ENCODE measurements at regions of chr1 and their contacts with region 1.

Region 1: DNA sequence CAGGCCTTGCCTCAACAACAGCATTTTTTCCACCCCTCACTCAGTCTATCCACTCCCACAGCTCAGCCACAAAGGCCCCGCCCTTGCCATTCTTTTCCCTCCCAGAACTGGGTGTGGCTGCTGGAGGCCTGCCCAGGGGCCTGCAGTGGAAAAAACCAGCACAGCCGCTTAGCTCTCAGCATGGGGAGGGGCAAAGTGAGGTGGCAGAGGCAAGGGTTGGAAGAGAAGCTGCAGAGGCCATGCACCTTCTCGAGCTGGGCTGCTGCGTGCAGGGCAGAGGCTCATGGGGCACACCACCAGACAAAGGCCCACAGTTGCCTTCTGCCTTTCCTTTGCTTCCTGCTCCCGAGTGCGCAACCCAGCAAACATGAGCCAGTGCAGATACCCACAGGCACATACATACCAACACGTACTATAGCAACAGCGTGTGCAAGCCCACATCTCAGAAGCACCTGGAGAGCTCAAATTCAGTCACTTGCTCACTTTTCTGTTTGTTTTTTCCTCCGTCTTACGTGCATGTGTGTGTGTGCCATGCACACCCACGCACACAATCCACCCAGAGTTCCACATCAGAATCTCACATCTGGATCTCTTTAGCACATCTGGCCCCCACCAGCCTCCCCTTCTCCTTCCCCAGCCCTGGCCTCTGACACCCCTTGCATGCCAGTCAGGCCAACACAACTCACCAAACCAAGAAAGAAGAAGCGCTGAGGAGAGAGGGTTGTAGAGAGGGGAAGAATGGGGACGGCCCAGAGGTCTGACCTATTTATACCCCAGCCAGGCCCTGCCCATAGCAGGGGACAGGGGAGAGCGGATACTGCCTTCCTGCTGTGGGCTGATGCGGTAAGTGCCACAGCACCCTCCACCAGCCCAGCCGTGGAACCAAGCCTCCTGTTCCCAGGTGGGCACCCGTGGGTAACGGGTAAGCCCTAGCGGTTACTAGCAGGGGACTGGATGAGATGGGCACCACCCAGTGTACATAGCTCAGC is at the start of gene S100A4:
- DNase-seq: peak; percentile 84 to 97
- H3K4me3 ChIP-seq: peak within 1 kb of the TSS; percentile 47 to 68
- H3K27ac ChIP-seq: peak within 1 kb of the TSS; percentile 90 to 92
- H3K4me1 ChIP-seq: peaks cover 48 to 73% of the 10 kb centered on the region in 2 donors
- H3K27me3 ChIP-seq: no peaks in the 10 kb centered on the region
- CTCF ChIP-seq: no peak
- total RNA-seq, gene S100A4: 690 TPM

Region 2: DNA sequence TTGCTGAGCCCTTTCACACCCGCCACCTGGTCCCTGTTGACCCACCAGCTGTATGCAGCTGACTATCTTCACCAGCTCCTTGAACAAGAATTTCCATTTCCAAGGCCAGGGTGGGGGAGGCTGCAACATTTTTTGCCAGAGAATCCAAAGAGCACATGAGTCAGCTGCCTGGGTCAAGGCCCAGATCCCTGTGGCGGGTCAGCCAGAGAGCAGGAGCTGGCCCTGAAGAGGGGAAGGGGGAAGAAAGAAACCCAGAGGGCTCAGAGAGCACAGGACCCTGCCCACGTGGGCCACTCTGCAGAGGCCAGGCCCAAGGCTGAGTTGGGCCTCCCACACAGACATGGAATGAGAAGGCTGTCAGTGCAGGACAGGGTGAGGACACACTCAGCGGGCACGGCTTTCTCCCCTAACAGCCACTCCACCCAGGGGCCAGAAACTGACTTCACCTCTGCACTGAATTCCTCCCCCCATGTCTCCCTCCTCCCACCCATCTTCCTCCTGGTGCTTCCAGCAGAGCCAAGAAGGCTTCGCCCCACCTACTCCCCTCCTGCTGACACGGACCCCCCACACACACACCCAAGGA is 38.4 kb before region 1 on chr1:
- intact Hi-C with region 1: no loop called
- DNase-seq: peak; percentile 80 to 95
- H3K4me3 ChIP-seq: peak overlapping the region in 1 of 2 donors; percentile 6
- H3K27ac ChIP-seq: peak overlapping the region; percentile 78 to 94
- H3K4me1 ChIP-seq: peaks cover 11 to 25% of the 10 kb centered on the region in 2 donors
- H3K27me3 ChIP-seq: no peaks in the 10 kb centered on the region
- CTCF ChIP-seq: no peak

Region 3: GRCh38 chr1:153556348-153556747 is 11.0 kb after region 1 on chr1:
- intact Hi-C with region 1: no loop called
- DNase-seq: no peak
- H3K4me3 ChIP-seq: no peak overlapping the region
- H3K27ac ChIP-seq: no peak overlapping the region
- H3K4me1 ChIP-seq: peaks cover 17 to 20% of the 10 kb centered on the region in 2 donors
- H3K27me3 ChIP-seq: no peaks in the 10 kb centered on the region
- CTCF ChIP-seq: no peak

Region 4: DNA sequence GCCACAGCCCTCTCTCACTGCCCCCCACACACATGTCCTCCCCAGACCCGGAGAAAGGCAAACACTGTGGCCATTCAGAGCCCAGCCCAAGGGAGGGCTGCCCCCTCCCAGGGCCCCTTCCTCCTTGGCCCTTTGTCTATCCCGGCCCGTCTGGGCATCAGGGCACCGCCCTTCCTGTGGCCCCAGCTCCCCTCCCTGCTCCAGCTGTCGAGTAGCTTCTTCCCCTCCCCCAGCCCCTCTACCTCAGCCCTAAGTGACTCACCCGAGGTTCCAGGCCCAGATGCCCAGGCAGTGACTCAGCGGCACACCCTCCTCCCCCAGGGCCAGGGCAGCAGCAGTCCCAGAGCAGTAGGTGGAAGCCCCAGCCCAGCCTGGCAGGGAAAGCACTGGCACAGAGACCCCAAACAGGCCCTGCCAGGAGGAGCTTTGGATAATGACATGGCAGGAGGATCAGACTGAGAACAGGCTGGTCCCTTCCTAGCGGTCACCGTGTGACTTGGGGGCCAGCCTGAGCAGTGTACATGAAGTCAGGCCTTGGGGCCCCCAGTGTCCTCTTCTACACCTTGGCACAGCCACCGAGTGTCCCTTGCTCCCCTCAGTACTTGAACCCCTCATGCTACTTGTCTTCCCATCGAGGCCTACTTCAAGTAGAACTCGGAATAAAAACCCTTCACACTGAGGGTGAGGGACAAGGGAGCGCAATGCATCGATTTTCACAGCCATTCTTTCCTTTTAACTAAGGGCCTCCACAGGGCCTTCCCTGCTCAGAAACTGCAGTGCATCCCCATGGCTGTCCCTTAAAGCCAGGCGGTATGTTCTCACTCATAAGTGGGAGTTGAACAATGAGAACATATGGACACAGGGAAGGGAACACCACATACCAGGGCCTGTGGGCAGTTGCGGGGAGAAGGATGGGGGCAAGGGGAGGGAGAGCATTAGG is 21.3 kb after region 1 on chr1:
- intact Hi-C with region 1: loop called (anchors 1 kb)
- DNase-seq: peak; percentile 97 to 99
- H3K4me3 ChIP-seq: peak overlapping the region in 1 of 2 donors; percentile 4
- H3K27ac ChIP-seq: peak overlapping the region; percentile 91 to 94
- H3K4me1 ChIP-seq: peaks cover 16 to 30% of the 10 kb centered on the region in 2 donors
- H3K27me3 ChIP-seq: no peaks in the 10 kb centered on the region
- CTCF ChIP-seq: no peak

Region 5: GRCh38 chr1:153598309-153599172 is 53.2 kb after region 1 on chr1:
- intact Hi-C with region 1: no loop called
- DNase-seq: no peak
- H3K4me3 ChIP-seq: no peak overlapping the region
- H3K27ac ChIP-seq: no peak overlapping the region
- H3K4me1 ChIP-seq: no peaks in the 10 kb centered on the region
- H3K27me3 ChIP-seq: no peaks in the 10 kb centered on the region
- CTCF ChIP-seq: no peak

Measured in ascending aorta (tissue), 2 donors.